T-cell (primary cell): ENCODE measurements at regions of chr10 and their contacts with region 1.

Region 1: GRCh38 chr10:61110188-61110920 is 166.4 kb upstream of the RHOBTB1 start:
- DNase-seq: no peak
- ATAC-seq: no peak
- H3K4me3 ChIP-seq: no peak overlapping the region
- H3K4me3 Mint-ChIP-seq: no peak overlapping the region
- H3K27ac ChIP-seq: no peak overlapping the region
- H3K27ac Mint-ChIP-seq: no peak overlapping the region
- H3K4me1 ChIP-seq: no peaks in the 10 kb centered on the region
- H3K4me1 Mint-ChIP-seq: no peaks in the 10 kb centered on the region
- H3K27me3 ChIP-seq: no peaks in the 10 kb centered on the region
- H3K27me3 Mint-ChIP-seq: peaks cover 9 to 11% of the 10 kb centered on the region in 2 donors

Region 2: GRCh38 chr10:59366290-59366689 is 1744.1 kb before region 1 on chr10:
- CTCF ChIA-PET with region 1: no interaction called
- POLR2A ChIA-PET with region 1: interaction called in 1 of 2 experiments, 11 read pairs
- DNase-seq: no peak
- ATAC-seq: no peak
- H3K4me3 ChIP-seq: no peak overlapping the region
- H3K4me3 Mint-ChIP-seq: no peak overlapping the region
- H3K27ac ChIP-seq: no peak overlapping the region
- H3K27ac Mint-ChIP-seq: no peak overlapping the region
- H3K4me1 ChIP-seq: peaks cover 0 to 5% of the 10 kb centered on the region in 2 experiments
- H3K4me1 Mint-ChIP-seq: peaks cover 6 to 13% (median 11%) of the 10 kb centered on the region in 3 donors
- H3K27me3 ChIP-seq: peaks cover 4 to 10% of the 10 kb centered on the region in 2 experiments
- H3K27me3 Mint-ChIP-seq: peaks cover 13% of the 10 kb centered on the region in 2 donors